ENCODE measurements at regions of chr17 and their contacts with region 1.

Region 1: GRCh38 chr17:43673516-43674323 is 12.0 kb upstream of the MEOX1 start:
- DNase-seq: no peak
- H3K4me3 ChIP-seq: no peak overlapping the region
- H3K27ac ChIP-seq: no peak overlapping the region
- H3K27me3 ChIP-seq: peaks cover 3% of the 10 kb centered on the region
- CTCF ChIP-seq: peak; percentile 99

Region 2: GRCh38 chr17:43584666-43585102 is 89.0 kb before region 1 on chr17:
- CTCF ChIA-PET with region 1: interaction called, 11 read pairs
- POLR2A ChIA-PET with region 1: interaction called, 6 read pairs
- DNase-seq: no peak
- H3K4me3 ChIP-seq: no peak overlapping the region
- H3K27ac ChIP-seq: no peak overlapping the region
- H3K27me3 ChIP-seq: no peaks in the 10 kb centered on the region
- CTCF ChIP-seq: no peak

Region 3: GRCh38 chr17:43591779-43592562 is 81.7 kb before region 1 on chr17:
- CTCF ChIA-PET with region 1: interaction called, 17 read pairs
- POLR2A ChIA-PET with region 1: no interaction called
- DNase-seq: peak; percentile 59
- H3K4me3 ChIP-seq: 0 out of 2 replicates have a peak overlapping the region, but pooled peaks have one; percentile 7
- H3K27ac ChIP-seq: peak overlapping the region; percentile 94
- H3K27me3 ChIP-seq: no peaks in the 10 kb centered on the region
- CTCF ChIP-seq: no peak

Region 4: DNA sequence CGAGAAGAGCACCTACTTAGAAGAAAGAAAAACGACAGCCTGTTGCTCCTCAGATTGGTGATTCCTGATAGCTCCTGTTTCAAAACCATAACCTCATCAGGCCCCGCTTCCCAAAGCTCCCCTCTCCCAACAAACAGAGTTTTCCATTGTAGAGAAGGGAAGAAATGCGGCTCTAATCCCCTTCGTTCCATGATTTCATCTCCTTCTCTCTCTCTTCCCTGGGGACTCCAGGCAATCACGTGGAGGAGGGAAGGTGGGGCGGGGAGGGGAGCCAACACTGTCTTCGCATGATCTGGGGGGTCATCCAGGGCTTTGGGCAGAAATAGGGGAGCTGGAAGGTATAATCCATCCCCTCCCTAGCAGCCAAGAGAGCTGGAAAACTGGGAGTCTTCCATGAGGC is 55.4 kb before region 1 on chr17:
- CTCF ChIA-PET with region 1: interaction called, 10 read pairs
- POLR2A ChIA-PET with region 1: no interaction called
- DNase-seq: no peak
- H3K4me3 ChIP-seq: no peak overlapping the region
- H3K27ac ChIP-seq: no peak overlapping the region
- H3K27me3 ChIP-seq: peaks cover 5% of the 10 kb centered on the region
- CTCF ChIP-seq: no peak

Region 5: GRCh38 chr17:43740541-43740940 is 66.8 kb after region 1 on chr17:
- CTCF ChIA-PET with region 1: no interaction called
- POLR2A ChIA-PET with region 1: no interaction called
- DNase-seq: no peak
- H3K4me3 ChIP-seq: no peak overlapping the region
- H3K27ac ChIP-seq: no peak overlapping the region
- H3K27me3 ChIP-seq: peaks cover 2% of the 10 kb centered on the region
- CTCF ChIP-seq: no peak

Region 6: GRCh38 chr17:43766413-43767052 is 92.8 kb after region 1 on chr17:
- CTCF ChIA-PET with region 1: interaction called, 10 read pairs
- POLR2A ChIA-PET with region 1: no interaction called
- DNase-seq: no peak
- H3K4me3 ChIP-seq: no peak overlapping the region
- H3K27ac ChIP-seq: no peak overlapping the region
- H3K27me3 ChIP-seq: no peaks in the 10 kb centered on the region
- CTCF ChIP-seq: peak; percentile 82

Measured in AG04450 (cell line).